Activated CD4-positive, alpha-beta T cell treated with anti-CD3 and anti-CD28 coated beads for 36 hours (primary cell): ENCODE measurements at regions of chr17 and their contacts with region 1.

Region 1: DNA sequence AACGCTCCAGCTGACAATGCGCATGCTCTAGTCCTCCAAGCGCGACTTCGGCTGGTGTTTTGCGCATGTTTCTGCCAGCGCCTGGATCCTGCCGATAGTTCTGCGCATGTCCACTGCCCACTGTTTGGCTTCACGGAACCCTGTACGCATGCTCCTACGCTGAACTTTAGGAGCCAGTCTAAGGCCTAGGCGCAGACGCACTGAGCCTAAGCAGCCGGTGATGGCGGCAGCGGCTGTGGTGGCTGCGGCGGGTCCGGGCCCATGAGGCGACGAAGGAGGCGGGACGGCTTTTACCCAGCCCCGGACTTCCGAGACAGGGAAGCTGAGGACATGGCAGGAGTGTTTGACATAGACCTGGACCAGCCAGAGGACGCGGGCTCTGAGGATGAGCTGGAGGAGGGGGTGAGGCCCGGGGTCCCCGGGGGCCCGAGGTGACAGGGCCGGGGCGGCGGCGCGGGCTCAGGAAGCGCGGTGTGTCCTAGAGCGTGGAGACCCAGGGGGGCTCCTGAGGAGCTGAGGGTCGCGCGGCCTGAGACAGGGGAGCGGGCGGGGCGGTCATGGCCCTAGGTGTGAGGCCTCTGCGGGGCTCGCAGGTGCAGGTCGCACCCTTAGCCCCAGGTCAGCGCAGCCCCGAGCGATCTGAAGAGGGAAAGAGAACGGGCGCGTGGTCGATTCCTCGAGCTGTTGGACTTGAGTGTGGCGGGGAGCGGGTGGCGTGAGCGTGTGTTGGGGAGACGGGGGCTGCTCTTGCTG is at the starts of genes RPS6KB1 and TUBD1:
- DNase-seq: peak; percentile 98
- ATAC-seq: peak; percentile 97
- H3K4me3 Mint-ChIP-seq: peak within 1 kb of the TSS; percentile 99
- H3K27ac Mint-ChIP-seq: peak within 1 kb of the TSS; percentile 97
- H3K4me1 Mint-ChIP-seq: peaks cover 45% of the 10 kb centered on the region
- H3K27me3 Mint-ChIP-seq: no peaks in the 10 kb centered on the region
- total RNA-seq, gene RPS6KB1: 52.6 to 54.5 TPM
- total RNA-seq, gene TUBD1: 10.6 to 11.0 TPM

Region 2: GRCh38 chr17:59155439-59156182 is 737.5 kb before region 1 on chr17 and contains the start of gene PRR11:
- CTCF ChIA-PET with region 1: no interaction called
- POLR2A ChIA-PET with region 1: no interaction called
- intact Hi-C with region 1: loop called in 1 of 2 experiments (anchors 5 kb)
- DNase-seq: peak; percentile 96
- ATAC-seq: peak; percentile 89
- H3K4me3 Mint-ChIP-seq: no peak within 1 kb of the TSS
- H3K27ac Mint-ChIP-seq: no peak within 1 kb of the TSS
- H3K4me1 Mint-ChIP-seq: peaks cover 37% of the 10 kb centered on the region
- H3K27me3 Mint-ChIP-seq: no peaks in the 10 kb centered on the region
- total RNA-seq, gene PRR11: 73.6 to 95.9 TPM

Region 3: GRCh38 chr17:59753522-59754467 is 139.3 kb before region 1 on chr17:
- CTCF ChIA-PET with region 1: interaction called, 6 read pairs
- POLR2A ChIA-PET with region 1: interaction called, 6 read pairs
- intact Hi-C with region 1: loop called in 1 of 2 experiments (anchors 2 kb)
- DNase-seq: no peak
- ATAC-seq: peak; percentile 47
- H3K4me3 Mint-ChIP-seq: peak overlapping the region; percentile 66
- H3K27ac Mint-ChIP-seq: peak overlapping the region; percentile 92
- H3K4me1 Mint-ChIP-seq: peaks cover 71% of the 10 kb centered on the region
- H3K27me3 Mint-ChIP-seq: no peaks in the 10 kb centered on the region

Region 4: GRCh38 chr17:59941131-59941530 is 48.0 kb after region 1 on chr17:
- CTCF ChIA-PET with region 1: interaction called, 4 read pairs
- POLR2A ChIA-PET with region 1: interaction called, 4 read pairs
- intact Hi-C with region 1: loop called (anchors 1 to 2 kb)
- DNase-seq: peak; percentile 31
- ATAC-seq: peak; percentile 51
- H3K4me3 Mint-ChIP-seq: peak overlapping the region; percentile 27
- H3K27ac Mint-ChIP-seq: peak overlapping the region; percentile 94
- H3K4me1 Mint-ChIP-seq: peaks cover 53% of the 10 kb centered on the region
- H3K27me3 Mint-ChIP-seq: no peaks in the 10 kb centered on the region

Region 5: GRCh38 chr17:60077672-60078519 is 184.8 kb after region 1 on chr17:
- CTCF ChIA-PET with region 1: no interaction called
- POLR2A ChIA-PET with region 1: no interaction called
- intact Hi-C with region 1: loop called in 1 of 2 experiments (anchors 1 kb)
- DNase-seq: peak; percentile 81
- ATAC-seq: peak; percentile 73
- H3K4me3 Mint-ChIP-seq: peak overlapping the region; percentile 84
- H3K27ac Mint-ChIP-seq: peak overlapping the region; percentile 95
- H3K4me1 Mint-ChIP-seq: peaks cover 19% of the 10 kb centered on the region
- H3K27me3 Mint-ChIP-seq: no peaks in the 10 kb centered on the region

Region 6: GRCh38 chr17:60677308-60678124 is 784.4 kb after region 1 on chr17 and contains the start of gene BCAS3:
- CTCF ChIA-PET with region 1: no interaction called
- POLR2A ChIA-PET with region 1: no interaction called
- intact Hi-C with region 1: loop called in 1 of 2 experiments (anchors 1 kb)
- DNase-seq: peak; percentile 98
- ATAC-seq: peak; percentile 97
- H3K4me3 Mint-ChIP-seq: peak within 1 kb of the TSS; percentile 95
- H3K27ac Mint-ChIP-seq: peak within 1 kb of the TSS; percentile 84
- H3K4me1 Mint-ChIP-seq: peaks cover 16% of the 10 kb centered on the region
- H3K27me3 Mint-ChIP-seq: no peaks in the 10 kb centered on the region
- total RNA-seq, gene BCAS3: 7.2 to 7.5 TPM